CD4-positive, alpha-beta T cell (primary cell): ENCODE measurements at regions of chr7 and their contacts with region 1.

Region 1: DNA sequence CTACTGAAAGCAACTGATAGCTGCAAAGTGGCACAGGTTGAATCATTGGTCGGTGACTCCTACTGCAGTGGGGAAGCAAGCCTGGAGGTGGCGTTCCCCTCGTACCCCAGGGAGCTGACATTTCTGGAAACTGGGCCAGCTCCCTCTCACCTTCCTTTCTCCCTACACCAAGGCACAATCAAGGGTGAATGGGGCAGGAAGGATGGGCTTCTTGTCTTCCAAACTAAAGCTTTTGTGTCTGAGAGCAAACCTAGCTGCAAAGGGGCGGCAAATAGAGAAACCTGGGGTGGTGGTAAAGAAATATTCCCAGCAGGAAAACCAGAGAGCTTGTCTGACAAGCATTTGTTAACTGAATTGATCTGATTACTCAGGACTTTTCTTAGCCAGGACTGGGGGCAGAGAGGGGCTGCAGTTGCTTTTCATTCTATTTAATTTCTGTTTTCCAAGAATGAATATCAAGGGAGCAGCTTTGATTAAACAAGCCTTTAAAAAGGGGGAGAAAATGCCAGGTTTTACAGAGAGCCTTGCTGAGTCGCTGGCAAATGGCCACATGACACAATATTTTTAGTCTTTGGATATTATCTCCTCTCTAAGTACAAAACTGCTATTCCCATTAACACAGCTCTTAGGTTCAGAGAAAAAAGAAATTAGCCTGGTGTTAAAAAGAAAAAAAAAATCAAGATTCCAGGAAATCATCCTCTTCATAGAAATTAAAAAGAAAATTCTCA is 27.8 kb downstream of the CDHR3 start:
- DNase-seq: no peak
- ATAC-seq: no peak
- H3K4me3 ChIP-seq: no peak overlapping the region
- H3K4me3 Mint-ChIP-seq: no peak overlapping the region
- H3K27ac ChIP-seq: no peak overlapping the region
- H3K27ac Mint-ChIP-seq: no peak overlapping the region
- H3K4me1 ChIP-seq: no peaks in the 10 kb centered on the region
- H3K4me1 Mint-ChIP-seq: peaks cover 30% of the 10 kb centered on the region
- H3K27me3 ChIP-seq: no peaks in the 10 kb centered on the region
- H3K27me3 Mint-ChIP-seq: no peaks in the 10 kb centered on the region
- CTCF ChIP-seq: no peak

Region 2: GRCh38 chr7:105934572-105935185 is 56.2 kb before region 1 on chr7:
- CTCF ChIA-PET with region 1: no interaction called
- POLR2A ChIA-PET with region 1: no interaction called
- intact Hi-C with region 1: loop called in 1 of 2 experiments (anchors 5 kb)
- DNase-seq: peak in 4 of 14 experiments; percentile 6 to 33 (median 28)
- ATAC-seq: no peak
- H3K4me3 ChIP-seq: no peak overlapping the region
- H3K4me3 Mint-ChIP-seq: no peak overlapping the region
- H3K27ac ChIP-seq: no peak overlapping the region
- H3K27ac Mint-ChIP-seq: no peak overlapping the region
- H3K4me1 ChIP-seq: no peaks in the 10 kb centered on the region
- H3K4me1 Mint-ChIP-seq: peaks cover 24% of the 10 kb centered on the region
- H3K27me3 ChIP-seq: no peaks in the 10 kb centered on the region
- H3K27me3 Mint-ChIP-seq: no peaks in the 10 kb centered on the region
- CTCF ChIP-seq: no peak